ENCODE measurements at regions of chr2 and their contacts with region 1.

Region 1: DNA sequence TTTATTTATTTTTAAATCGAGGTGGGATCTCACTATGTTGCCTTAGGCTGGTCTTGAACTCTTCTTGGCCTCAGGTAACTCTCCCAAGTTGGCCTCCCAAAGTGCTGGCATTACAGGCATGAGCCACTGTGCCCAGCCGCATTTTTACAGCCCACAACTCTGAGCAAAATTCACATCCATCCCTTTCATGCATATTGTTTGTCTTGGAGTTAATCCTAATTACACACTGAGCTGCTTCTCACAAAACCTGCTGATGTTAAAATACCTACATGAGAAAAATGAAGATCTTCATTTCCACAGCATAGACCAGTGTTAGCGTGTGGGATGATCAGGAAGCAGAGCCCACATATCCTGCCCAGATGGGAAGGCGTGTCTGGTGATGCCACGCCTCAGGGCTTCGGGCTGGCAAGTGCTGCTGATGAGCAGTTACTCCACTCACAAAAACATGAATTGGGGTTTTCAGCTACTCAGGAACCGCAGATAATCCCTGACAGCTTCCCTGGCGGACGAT is 14.6 kb downstream of the ITGB1BP1 start:
- DNase-seq: peak in 1 of 2 donors; percentile 76
- H3K4me3 ChIP-seq: no peak overlapping the region
- H3K27ac ChIP-seq: no peak overlapping the region
- H3K4me1 ChIP-seq: no peaks in the 10 kb centered on the region
- H3K27me3 ChIP-seq: no peaks in the 10 kb centered on the region
- CTCF ChIP-seq: no peak
- POLR2A ChIP-seq: no peak

Region 2: GRCh38 chr2:9238591-9239326 is 169.9 kb before region 1 on chr2:
- intact Hi-C with region 1: no loop called
- DNase-seq: no peak
- H3K4me3 ChIP-seq: no peak overlapping the region
- H3K27ac ChIP-seq: peak overlapping the region; percentile 59
- H3K4me1 ChIP-seq: peaks cover 52% of the 10 kb centered on the region
- H3K27me3 ChIP-seq: no peaks in the 10 kb centered on the region
- CTCF ChIP-seq: no peak
- POLR2A ChIP-seq: no peak

Region 3: DNA sequence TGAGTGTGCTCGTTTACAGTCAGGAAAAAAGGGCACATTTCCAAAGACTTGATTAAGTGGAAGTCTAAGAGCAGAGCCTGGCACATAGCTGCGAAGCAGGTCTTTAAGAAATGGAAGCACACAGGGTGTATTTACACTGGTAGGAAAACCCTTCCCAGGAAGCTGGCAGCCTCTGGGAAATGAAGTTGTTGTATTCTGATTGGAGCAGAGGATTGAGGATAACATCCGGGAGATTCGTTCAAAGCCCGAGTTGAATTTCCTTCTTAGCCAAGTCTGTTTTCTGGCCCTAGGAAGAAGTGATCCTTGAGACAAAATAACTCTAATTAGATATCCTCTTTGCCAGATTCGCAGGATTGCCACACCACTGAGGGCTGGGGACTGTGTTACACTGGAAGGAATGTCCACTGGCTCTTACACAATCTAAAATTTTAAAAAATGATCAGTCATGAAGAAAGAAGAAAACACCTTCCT is 61.2 kb before region 1 on chr2:
- intact Hi-C with region 1: loop called (anchors 10 kb)
- DNase-seq: peak in 1 of 2 donors; percentile 92
- H3K4me3 ChIP-seq: peak overlapping the region in 1 of 2 donors; percentile 11
- H3K27ac ChIP-seq: peak overlapping the region; percentile 74
- H3K4me1 ChIP-seq: peaks cover 8% of the 10 kb centered on the region
- H3K27me3 ChIP-seq: no peaks in the 10 kb centered on the region
- CTCF ChIP-seq: no peak
- POLR2A ChIP-seq: no peak